ENCODE measurements at regions of chr20 and their contacts with region 1.

Region 1: GRCh38 chr20:33394721-33395120 is 6.6 kb downstream of the CDK5RAP1 start:
- DNase-seq: no peak
- ATAC-seq: no peak
- H3K4me3 ChIP-seq: no peak overlapping the region
- H3K27ac ChIP-seq: no peak overlapping the region
- H3K4me1 ChIP-seq: no peaks in the 10 kb centered on the region
- H3K27me3 ChIP-seq: no peaks in the 10 kb centered on the region
- CTCF ChIP-seq: peak; percentile 11; the same call in 1 of the 2 replicates
- POLR2A ChIP-seq: no peak
- RAD21 ChIP-seq: no peak

Region 2: GRCh38 chr20:32902456-32903420 is 492.0 kb before region 1 on chr20:
- CTCF ChIA-PET with region 1: no interaction called
- POLR2A ChIA-PET with region 1: no interaction called
- dilution Hi-C with region 1: no loop called
- in situ Hi-C with region 1: no loop called
- intact Hi-C with region 1: no loop called
- DNase-seq: peak; percentile 41
- ATAC-seq: peak; percentile 89
- H3K4me3 ChIP-seq: no peak overlapping the region
- H3K27ac ChIP-seq: no peak overlapping the region
- H3K4me1 ChIP-seq: no peaks in the 10 kb centered on the region
- H3K27me3 ChIP-seq: peaks cover 6% of the 10 kb centered on the region; the same call in 1 of the 2 replicates
- CTCF ChIP-seq: peak; percentile 87
- POLR2A ChIP-seq: no peak
- RAD21 ChIP-seq: peak; percentile 83

Region 3: GRCh38 chr20:34123309-34123708 is 728.6 kb after region 1 on chr20:
- CTCF ChIA-PET with region 1: no interaction called
- POLR2A ChIA-PET with region 1: interaction called, 16 read pairs
- dilution Hi-C with region 1: no loop called
- in situ Hi-C with region 1: no loop called
- intact Hi-C with region 1: no loop called
- DNase-seq: no peak
- ATAC-seq: no peak
- H3K4me3 ChIP-seq: no peak overlapping the region
- H3K27ac ChIP-seq: no peak overlapping the region
- H3K4me1 ChIP-seq: no peaks in the 10 kb centered on the region
- H3K27me3 ChIP-seq: peaks cover 6% of the 10 kb centered on the region
- CTCF ChIP-seq: no peak
- POLR2A ChIP-seq: no peak
- RAD21 ChIP-seq: no peak

Measured in IMR-90 (cell line).